ENCODE measurements at regions of chr1 and their contacts with region 1.

Region 1: DNA sequence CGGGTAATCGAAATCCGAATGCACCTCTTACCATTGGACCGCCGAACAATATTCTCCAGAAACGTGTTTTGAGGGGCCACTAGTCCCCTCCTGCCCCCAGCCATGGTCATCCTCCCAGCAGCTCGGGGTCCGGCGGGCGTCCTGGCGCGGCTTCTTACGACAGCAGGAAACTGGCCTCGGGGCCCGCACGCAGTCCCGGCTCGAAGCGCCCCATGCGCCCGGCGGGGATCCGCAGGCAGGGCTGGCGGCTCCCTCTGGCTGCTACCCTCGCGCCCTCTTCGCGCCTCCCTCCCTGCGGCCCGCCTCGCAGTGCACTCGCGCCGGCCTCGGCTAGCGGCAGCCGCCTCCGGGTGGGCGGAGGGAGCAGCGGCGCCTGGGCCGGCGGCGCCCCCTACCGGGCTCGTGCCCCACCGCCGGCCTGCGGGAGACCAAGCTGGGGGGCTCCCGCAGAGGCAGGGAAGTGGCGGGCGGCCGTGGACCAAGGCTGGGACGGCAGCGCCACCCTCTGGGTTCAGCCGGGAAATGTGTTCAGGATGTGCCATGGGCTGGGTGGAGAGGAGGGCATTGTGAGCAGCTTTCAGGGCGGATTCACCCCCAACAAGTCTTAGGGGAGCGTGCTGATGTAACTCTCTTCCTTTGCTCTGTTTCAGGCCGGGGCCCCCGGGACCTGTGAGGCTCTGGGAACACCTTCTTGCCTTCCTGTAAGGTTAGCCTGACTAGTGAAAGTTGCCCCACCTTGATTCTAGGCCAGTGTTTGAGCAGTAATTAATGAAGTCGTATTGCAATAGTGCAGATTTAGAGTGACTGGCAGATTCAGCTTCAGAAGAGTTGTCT is at the start of gene KCNH1:
- DNase-seq: peak; percentile 64
- H3K4me3 Mint-ChIP-seq: peak within 1 kb of the TSS; percentile 58
- H3K27ac Mint-ChIP-seq: no peak within 1 kb of the TSS
- H3K4me1 Mint-ChIP-seq: peaks cover 9% of the 10 kb centered on the region
- H3K27me3 Mint-ChIP-seq: peaks cover 67% of the 10 kb centered on the region
- total RNA-seq, gene KCNH1: not detected

Region 2: DNA sequence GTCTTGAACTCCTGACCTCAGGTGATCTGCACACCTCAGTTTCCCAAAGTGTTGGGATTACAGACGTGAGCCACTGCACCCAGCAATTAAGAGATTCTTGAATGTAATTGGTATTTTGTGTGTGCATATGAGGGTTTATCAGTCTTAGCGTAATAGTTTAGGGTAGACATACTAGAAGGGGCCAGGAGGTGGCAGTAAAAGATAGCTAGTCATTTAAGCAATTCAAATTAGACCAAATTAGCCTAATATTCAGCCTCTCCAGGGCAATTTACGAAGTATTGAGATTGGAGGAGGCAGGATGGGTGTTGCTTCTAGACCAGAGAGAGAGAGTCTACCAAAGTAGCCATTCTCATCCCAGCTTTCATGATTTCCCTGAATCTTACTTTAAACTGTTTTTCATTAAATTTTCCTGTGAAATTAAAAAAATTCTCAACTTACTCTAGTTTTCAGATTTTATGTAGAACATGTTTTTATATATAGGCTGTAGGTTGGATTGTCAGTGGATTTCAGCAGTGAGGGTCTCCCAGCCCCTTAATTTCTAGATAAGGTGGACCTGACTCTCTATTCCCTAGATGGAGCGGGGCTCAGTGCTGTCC is 685.7 kb before region 1 on chr1:
- CTCF ChIA-PET with region 1: interaction called, 12 read pairs
- POLR2A ChIA-PET with region 1: no interaction called
- DNase-seq: peak; percentile 29
- H3K4me3 Mint-ChIP-seq: no peak overlapping the region
- H3K27ac Mint-ChIP-seq: no peak overlapping the region
- H3K4me1 Mint-ChIP-seq: peaks cover 20% of the 10 kb centered on the region
- H3K27me3 Mint-ChIP-seq: peaks cover 9% of the 10 kb centered on the region